Common myeloid progenitor, CD34-positive (primary cell): ENCODE measurements at regions of chr3 and their contacts with region 1.

Region 1: GRCh38 chr3:58217209-58217811 is 6.5 kb upstream of the DNASE1L3 start:
- DNase-seq: peak; percentile 80 to 88 (median 86)
- H3K4me3 ChIP-seq: peak overlapping the region in 6 of 7 experiments; percentile 29 to 75 (median 48)
- H3K27ac ChIP-seq: no peak overlapping the region
- H3K4me1 ChIP-seq: peaks cover 5 to 24% (median 9%) of the 10 kb centered on the region in 4 experiments
- H3K27me3 ChIP-seq: no peaks in the 10 kb centered on the region

Region 2: DNA sequence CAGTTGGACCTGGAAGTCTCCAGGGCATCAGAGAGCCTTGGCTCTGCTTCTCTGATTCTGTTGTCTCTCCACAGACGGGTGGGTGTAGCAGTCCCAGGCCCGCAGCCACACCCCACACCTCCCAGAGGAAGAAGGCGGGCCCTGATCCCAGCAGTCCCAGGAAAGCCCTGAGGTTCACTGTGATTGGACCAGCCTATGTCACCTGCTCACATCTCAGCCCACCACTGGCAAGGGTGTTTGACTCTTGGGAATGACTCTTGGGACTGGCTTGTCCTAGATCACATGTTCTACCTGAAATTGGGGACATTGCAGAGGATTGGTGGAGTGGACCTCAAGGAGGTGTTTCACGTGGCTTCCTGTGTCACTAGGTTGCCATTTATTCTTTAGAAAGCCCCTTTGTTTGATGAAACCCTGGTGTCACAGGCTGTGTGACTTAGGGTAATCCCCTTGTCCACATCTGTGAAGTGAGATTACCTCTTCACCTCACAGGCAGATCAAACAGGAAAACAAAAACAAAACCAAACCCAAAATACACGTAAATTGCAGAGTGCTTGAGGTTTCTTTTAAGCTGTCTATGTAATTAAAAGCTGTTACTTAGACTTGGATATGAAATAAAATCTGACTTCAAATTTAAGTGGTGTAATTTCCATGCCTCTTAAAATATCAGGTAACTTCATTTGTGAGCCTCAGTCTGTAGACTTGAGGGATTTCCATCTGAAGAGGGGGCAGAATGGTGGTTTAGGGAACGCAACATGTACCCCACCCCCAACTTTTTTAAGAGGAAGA is 182.4 kb before region 1 on chr3:
- CTCF ChIA-PET with region 1: no interaction called
- POLR2A ChIA-PET with region 1: no interaction called
- DNase-seq: peak in 2 of 3 donors; percentile 76 to 81
- H3K4me3 ChIP-seq: no peak overlapping the region
- H3K27ac ChIP-seq: peak overlapping the region in 1 of 2 experiments; percentile 23
- H3K4me1 ChIP-seq: peaks cover 4 to 20% (median 13%) of the 10 kb centered on the region in 4 experiments
- H3K27me3 ChIP-seq: no peaks in the 10 kb centered on the region

Region 3: GRCh38 chr3:58135712-58136543 is 81.4 kb before region 1 on chr3:
- CTCF ChIA-PET with region 1: no interaction called
- POLR2A ChIA-PET with region 1: no interaction called
- DNase-seq: peak in 2 of 3 donors; percentile 8 to 15
- H3K4me3 ChIP-seq: no peak overlapping the region
- H3K27ac ChIP-seq: no peak overlapping the region
- H3K4me1 ChIP-seq: no peaks in the 10 kb centered on the region
- H3K27me3 ChIP-seq: no peaks in the 10 kb centered on the region

Region 4: GRCh38 chr3:58151637-58152036 is 65.7 kb before region 1 on chr3:
- CTCF ChIA-PET with region 1: no interaction called
- POLR2A ChIA-PET with region 1: no interaction called
- DNase-seq: no peak
- H3K4me3 ChIP-seq: no peak overlapping the region
- H3K27ac ChIP-seq: no peak overlapping the region
- H3K4me1 ChIP-seq: no peaks in the 10 kb centered on the region
- H3K27me3 ChIP-seq: no peaks in the 10 kb centered on the region

Region 5: GRCh38 chr3:58200846-58201355 is 16.4 kb before region 1 on chr3:
- CTCF ChIA-PET with region 1: interaction called, 31 read pairs
- POLR2A ChIA-PET with region 1: interaction called, 5 read pairs
- DNase-seq: peak in 2 of 3 donors; percentile 36 to 49
- H3K4me3 ChIP-seq: peak overlapping the region in 4 of 7 experiments; percentile 1 to 51 (median 10)
- H3K27ac ChIP-seq: no peak overlapping the region
- H3K4me1 ChIP-seq: peaks cover 0 to 19% (median 9%) of the 10 kb centered on the region in 4 experiments
- H3K27me3 ChIP-seq: no peaks in the 10 kb centered on the region

Region 6: GRCh38 chr3:58234516-58234931 is 17.2 kb after region 1 on chr3:
- CTCF ChIA-PET with region 1: interaction called, 19 read pairs
- POLR2A ChIA-PET with region 1: no interaction called
- DNase-seq: peak in 1 of 3 donors; percentile 15
- H3K4me3 ChIP-seq: no peak overlapping the region
- H3K27ac ChIP-seq: no peak overlapping the region
- H3K4me1 ChIP-seq: peaks cover 0 to 24% (median 20%) of the 10 kb centered on the region in 4 experiments
- H3K27me3 ChIP-seq: peaks cover 0 to 3% (median 0%) of the 10 kb centered on the region in 5 experiments